Left colon (tissue), 2 donors: ENCODE measurements at regions of chr11 and their contacts with region 1.

Region 1: GRCh38 chr11:94519478-94520084 is 7.3 kb downstream of the C11orf97 start:
- DNase-seq: no peak
- ATAC-seq: peak; percentile 56

Region 2: GRCh38 chr11:94602430-94603372 is 83.1 kb after region 1 on chr11:
- intact Hi-C with region 1: loop called in 1 of 2 experiments (anchors 5 kb)
- DNase-seq: peak in 1 of 2 donors; percentile 74
- ATAC-seq: no peak